Right ventricle myocardium inferior (tissue), 1 donor: ENCODE measurements at regions of chr15 and their contacts with region 1.

Region 1: DNA sequence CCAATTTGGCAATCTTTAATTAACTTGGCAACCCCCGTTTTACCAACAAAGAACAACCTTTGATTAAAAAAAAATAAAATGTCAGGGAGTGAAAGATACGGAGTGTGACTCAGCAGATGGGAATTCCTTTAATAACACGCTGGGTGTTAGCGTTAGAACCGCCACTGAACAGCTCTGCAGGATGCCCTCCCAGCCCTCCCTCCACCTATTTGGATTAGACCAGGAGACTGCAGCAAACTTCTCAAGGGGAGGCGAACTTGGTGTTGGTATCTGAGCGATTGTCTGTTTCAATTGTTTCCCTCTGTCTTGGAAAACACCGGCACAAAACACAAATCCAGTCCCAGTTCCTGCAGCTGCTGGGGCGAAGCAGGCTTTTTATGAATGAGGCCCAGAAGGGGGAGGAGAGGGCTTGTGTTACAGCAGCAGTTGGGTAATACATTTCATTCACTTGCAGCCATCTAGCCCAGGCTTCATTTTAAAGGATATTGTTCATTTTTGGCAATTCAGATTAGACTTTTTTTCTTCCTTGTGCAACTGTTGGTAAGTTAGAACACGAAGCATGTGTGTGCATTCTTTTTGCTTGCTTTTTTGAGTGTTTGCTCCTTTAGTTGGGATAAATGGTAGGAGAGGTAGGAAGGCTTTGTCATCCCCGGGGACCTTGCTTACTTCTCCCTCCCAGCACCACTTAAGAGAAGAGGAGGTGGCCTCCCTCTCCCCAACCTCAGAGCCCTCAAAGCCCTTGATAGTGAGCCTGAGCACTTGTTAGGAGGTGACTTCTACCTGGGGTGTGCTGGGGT is 152.3 kb downstream of the IGF1R start:
- DNase-seq: no peak
- ATAC-seq: peak; percentile 79

Region 2: DNA sequence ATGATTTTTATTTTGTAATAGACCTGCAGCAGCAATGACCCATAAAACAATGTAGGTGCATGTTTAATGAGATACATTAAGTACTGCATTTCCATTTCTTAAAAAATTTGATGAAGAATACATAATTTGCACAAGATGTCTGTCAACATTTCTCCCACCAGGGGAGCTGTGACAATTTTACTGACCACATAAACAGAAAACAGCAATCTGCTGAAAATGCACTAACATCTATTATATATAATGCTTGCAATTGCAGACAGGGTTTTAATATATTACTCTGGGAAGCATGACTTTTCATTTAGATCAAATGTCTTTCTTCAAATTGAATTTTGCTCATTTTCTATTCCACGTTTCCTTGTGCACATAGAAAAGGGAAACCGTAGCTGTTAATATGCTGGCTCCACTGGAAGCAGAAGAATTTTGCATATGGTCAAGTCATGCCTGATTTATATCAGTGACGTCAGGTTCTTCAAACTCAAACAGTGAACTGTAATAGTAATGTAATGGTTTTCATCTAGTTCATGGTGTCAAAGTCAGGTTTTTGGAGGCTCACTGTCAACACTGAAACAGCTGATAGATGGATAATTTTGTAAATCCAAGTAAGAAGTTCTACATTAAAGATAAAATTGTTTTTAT is 232.1 kb before region 1 on chr15:
- intact Hi-C with region 1: no loop called
- DNase-seq: no peak
- ATAC-seq: no peak

Region 3: DNA sequence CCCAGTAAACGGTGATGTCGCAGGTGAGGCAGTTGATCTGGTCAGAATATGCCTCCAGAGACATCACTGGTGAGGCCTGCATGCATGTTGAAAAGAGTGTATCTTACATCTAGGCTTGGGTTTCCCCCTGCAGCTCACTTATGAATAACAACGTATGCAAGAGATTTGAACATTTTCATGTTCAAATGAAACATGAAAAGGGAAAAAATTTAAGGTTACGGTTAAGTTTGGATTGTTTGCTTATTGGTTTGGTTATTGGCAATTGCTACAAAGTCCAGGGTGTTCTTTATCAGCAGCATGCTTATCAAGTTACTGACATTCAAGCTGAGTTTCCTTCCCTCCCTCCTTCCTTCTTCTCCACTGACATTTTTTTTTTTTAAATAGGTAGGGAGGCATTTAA is 29.1 kb before region 1 on chr15:
- intact Hi-C with region 1: no loop called
- DNase-seq: no peak
- ATAC-seq: no peak

Region 4: GRCh38 chr15:98842192-98842966 is 41.7 kb after region 1 on chr15:
- intact Hi-C with region 1: loop called (anchors 5 kb)
- DNase-seq: no peak
- ATAC-seq: no peak